PC-9 (cell line): ENCODE measurements at regions of chr4 and their contacts with region 1.

Region 1: DNA sequence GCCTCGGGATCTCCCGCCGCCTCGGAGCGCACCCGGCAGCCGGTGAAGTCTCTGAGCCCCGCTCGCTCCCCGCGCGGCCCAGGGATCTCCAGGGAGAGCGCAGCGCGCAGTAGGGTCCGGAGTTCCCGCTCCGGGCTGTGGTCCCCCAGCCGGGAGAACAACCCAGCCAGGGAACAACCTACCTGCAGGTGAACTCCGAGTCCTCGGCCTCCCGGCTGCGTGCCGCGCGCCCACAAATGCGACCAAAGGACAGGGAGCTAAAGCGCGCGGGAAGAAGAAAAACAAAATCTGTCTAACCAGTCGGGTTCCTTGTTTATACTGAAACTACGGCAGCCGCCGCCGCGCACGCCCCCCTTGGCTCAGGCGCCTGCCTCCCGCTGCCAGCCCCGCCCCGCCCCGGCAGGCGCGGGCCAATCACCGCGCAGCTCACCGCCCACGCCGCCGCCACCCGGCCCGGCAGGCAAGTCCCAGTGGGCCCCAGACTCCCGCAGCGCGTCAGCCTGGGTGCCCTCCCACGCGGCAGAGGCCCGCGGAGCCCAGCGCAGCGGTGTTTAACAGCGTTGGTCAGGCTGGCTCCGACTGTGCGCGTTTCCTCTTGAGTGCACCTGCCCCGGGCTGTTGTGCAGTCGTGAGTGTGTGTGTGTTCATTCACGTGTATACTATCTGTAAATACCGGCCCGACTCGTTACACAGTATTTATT is at the start of gene RASGEF1B:
- DNase-seq: peak; percentile 60 to 82
- H3K4me3 ChIP-seq: peak within 1 kb of the TSS; percentile 64
- H3K27ac ChIP-seq: 0 out of 2 replicates have a peak within 1 kb of the TSS, but pooled peaks have one; percentile 23
- H3K4me1 ChIP-seq: peaks cover 6% of the 10 kb centered on the region; the same call in 1 of the 2 replicates
- H3K27me3 ChIP-seq: no peaks in the 10 kb centered on the region
- CTCF ChIP-seq: no peak
- total RNA-seq, gene RASGEF1B: 0.70 and 1.0 TPM in 2 replicates

Region 2: GRCh38 chr4:79852305-79852730 is 1619.4 kb before region 1 on chr4:
- CTCF ChIA-PET with region 1: no interaction called
- POLR2A ChIA-PET with region 1: no interaction called
- intact Hi-C with region 1: no loop called
- DNase-seq: no peak
- H3K4me3 ChIP-seq: no peak overlapping the region
- H3K27ac ChIP-seq: no peak overlapping the region
- H3K4me1 ChIP-seq: no peaks in the 10 kb centered on the region
- H3K27me3 ChIP-seq: no peaks in the 10 kb centered on the region
- CTCF ChIP-seq: no peak

Region 3: DNA sequence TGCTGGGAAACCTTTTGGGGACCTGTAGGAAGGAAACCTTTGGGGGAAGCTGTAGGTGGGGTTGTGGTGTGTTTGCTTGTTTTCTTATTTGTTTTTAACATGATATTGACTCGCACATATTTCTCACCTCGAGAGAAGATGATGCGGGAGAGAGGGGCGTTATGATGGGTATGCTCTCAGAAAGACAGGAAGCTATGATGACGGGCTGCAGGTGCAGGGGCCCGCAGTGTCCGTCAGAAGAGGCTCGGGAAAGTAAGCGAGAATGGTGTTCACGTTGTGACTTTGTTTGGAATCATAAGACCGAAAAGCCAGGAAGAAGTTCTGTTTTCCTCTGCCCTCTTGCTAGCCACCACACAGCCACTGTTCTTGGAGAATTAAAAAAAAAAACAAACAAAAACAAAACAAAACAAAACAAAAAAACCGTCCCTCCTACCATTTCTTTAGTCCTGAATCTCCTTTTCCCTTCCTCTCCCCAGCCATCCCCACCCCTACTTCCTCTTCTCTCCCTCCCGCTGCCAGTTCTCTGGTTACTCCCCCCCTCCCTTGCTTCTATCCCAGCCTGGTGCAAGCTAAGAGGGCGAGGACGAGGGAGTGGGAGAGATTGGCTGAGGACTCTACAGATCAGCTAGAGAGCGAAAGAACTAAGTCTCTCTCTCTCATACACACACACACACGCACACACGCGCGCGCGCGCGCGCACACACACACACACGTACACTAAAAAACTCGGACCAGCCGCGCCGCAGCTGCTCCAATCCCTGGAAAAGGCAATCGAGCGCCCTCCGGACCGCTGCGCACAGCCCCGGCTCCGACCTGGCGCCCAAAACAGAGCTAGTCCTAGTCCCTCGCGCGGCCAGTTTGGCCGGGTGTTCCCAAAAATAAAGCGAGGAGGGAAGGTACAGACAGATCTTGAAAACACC is 441.4 kb before region 1 on chr4 and contains the start of gene BMP3:
- CTCF ChIA-PET with region 1: no interaction called
- POLR2A ChIA-PET with region 1: no interaction called
- intact Hi-C with region 1: no loop called
- DNase-seq: peak; percentile 20 to 48
- H3K4me3 ChIP-seq: peak within 1 kb of the TSS; percentile 63
- H3K27ac ChIP-seq: no peak within 1 kb of the TSS
- H3K4me1 ChIP-seq: 0 out of 2 replicates have a peak, but pooled peaks cover 6% of the 10 kb centered on the region
- H3K27me3 ChIP-seq: no peaks in the 10 kb centered on the region
- CTCF ChIP-seq: no peak
- total RNA-seq, gene BMP3: 0.41 and 0.50 TPM in 2 replicates

Region 4: DNA sequence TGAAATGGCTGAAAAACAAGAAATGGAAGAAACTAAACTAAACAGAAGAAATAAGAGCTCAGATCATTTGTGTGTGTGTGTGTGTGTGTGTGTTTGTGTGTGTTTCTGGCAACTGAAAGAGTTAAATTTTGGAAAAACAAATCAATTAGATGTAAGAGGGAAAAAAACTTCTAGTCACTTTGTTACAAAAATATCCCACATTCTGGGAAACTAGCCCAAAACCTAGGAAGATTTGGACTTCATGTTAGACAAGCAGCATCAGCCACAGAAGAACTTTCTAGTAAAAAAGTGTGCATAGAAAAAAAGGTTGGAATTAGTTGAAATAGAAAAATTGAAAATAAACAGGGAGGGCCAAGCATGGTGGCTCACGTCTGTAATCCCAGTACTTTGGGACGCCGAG is 145.2 kb before region 1 on chr4:
- CTCF ChIA-PET with region 1: no interaction called
- POLR2A ChIA-PET with region 1: no interaction called
- intact Hi-C with region 1: no loop called
- DNase-seq: no peak
- H3K4me3 ChIP-seq: no peak overlapping the region
- H3K27ac ChIP-seq: no peak overlapping the region
- H3K4me1 ChIP-seq: no peaks in the 10 kb centered on the region
- H3K27me3 ChIP-seq: no peaks in the 10 kb centered on the region
- CTCF ChIP-seq: no peak

Region 5: DNA sequence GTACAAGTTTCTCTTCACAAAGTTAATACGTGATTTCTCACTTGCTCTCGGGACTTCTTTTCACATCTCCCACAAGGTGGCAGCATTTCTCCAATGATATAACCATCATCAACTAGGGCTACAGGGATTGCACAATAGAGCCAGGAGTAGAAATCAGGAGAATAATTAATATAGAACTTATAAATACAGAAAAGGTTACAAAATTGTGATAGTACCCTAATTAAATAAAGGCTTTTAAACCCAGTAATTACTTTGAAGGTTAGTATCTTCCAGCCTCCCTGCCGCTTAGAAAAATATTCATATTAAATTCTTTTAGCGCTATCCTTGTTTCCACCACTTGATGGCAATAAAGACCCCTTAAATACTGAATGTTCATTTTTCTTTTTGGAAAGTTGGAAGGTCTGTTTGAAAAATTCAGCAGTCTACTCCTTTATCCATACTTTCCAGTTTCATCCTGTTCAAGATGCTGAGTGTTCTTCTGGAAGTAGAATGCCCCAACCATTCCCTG is 65.8 kb before region 1 on chr4:
- CTCF ChIA-PET with region 1: interaction called, 4 read pairs
- POLR2A ChIA-PET with region 1: no interaction called
- intact Hi-C with region 1: loop called (anchors 1 kb)
- DNase-seq: peak; percentile 8 to 52
- H3K4me3 ChIP-seq: no peak overlapping the region
- H3K27ac ChIP-seq: no peak overlapping the region
- H3K4me1 ChIP-seq: no peaks in the 10 kb centered on the region
- H3K27me3 ChIP-seq: no peaks in the 10 kb centered on the region
- CTCF ChIP-seq: peak; percentile 87

Region 6: DNA sequence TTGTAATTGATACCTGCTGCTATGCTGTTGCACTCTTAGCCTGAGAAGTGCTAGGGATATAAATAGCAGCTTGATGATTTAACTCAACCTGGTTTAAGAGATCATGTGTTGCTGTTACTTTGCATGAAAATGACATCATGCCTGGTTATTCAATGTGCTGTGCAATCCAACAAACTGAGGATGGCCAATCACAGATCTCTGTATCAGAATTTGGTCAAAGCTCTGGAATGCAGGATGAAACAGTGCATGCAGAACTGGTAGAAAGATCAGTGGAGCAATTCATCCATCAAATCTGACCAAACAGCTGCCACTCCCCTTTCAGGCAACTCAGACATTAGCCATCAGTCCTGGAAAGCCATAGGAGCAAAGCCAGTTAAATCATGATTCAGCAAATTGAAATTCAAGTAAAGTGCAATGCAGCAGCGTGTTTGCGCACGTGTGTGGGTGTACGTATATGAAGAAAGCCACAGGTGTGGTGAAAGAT is 160.3 kb after region 1 on chr4:
- CTCF ChIA-PET with region 1: no interaction called
- POLR2A ChIA-PET with region 1: no interaction called
- intact Hi-C with region 1: loop called (anchors 10 kb)
- DNase-seq: peak; percentile 41 to 79
- H3K4me3 ChIP-seq: no peak overlapping the region
- H3K27ac ChIP-seq: peak overlapping the region; percentile 59
- H3K4me1 ChIP-seq: 0 out of 2 replicates have a peak, but pooled peaks cover 5% of the 10 kb centered on the region
- H3K27me3 ChIP-seq: no peaks in the 10 kb centered on the region
- CTCF ChIP-seq: no peak

Region 7: GRCh38 chr4:81844717-81845116 is 373.0 kb after region 1 on chr4:
- CTCF ChIA-PET with region 1: interaction called, 5 read pairs
- POLR2A ChIA-PET with region 1: no interaction called
- intact Hi-C with region 1: loop called (anchors 1 kb)
- DNase-seq: peak; percentile 58 to 74
- H3K4me3 ChIP-seq: no peak overlapping the region
- H3K27ac ChIP-seq: no peak overlapping the region
- H3K4me1 ChIP-seq: no peaks in the 10 kb centered on the region
- H3K27me3 ChIP-seq: no peaks in the 10 kb centered on the region
- CTCF ChIP-seq: peak; percentile 60

Region 8: DNA sequence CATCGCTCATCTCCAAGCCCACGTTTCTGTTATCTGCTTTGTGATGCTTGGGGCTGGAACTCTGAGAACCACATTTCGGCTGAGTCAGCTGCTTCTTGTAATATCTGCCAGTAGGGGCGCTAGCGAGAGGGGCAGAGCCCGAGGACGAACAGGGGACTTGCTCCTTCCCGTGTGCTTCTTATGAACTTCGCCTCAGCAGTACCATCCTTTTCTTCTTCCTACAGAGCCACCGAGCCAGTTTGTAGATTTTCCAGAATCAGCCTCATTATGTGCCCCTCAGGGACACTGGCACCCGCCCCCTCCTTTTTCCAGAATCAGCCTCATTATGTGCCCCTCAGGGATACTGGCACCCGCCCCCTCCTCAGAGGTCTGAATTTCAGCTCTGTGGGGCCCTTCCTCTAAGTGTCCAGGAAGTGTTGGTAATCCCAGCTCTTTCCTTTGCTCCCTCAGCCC is 441.7 kb after region 1 on chr4:
- CTCF ChIA-PET with region 1: no interaction called
- POLR2A ChIA-PET with region 1: no interaction called
- intact Hi-C with region 1: loop called (anchors 5 kb)
- DNase-seq: peak in 1 of 2 experiments; percentile 17
- H3K4me3 ChIP-seq: no peak overlapping the region
- H3K27ac ChIP-seq: no peak overlapping the region
- H3K4me1 ChIP-seq: no peaks in the 10 kb centered on the region
- H3K27me3 ChIP-seq: no peaks in the 10 kb centered on the region
- CTCF ChIP-seq: peak; percentile 66

Region 9: DNA sequence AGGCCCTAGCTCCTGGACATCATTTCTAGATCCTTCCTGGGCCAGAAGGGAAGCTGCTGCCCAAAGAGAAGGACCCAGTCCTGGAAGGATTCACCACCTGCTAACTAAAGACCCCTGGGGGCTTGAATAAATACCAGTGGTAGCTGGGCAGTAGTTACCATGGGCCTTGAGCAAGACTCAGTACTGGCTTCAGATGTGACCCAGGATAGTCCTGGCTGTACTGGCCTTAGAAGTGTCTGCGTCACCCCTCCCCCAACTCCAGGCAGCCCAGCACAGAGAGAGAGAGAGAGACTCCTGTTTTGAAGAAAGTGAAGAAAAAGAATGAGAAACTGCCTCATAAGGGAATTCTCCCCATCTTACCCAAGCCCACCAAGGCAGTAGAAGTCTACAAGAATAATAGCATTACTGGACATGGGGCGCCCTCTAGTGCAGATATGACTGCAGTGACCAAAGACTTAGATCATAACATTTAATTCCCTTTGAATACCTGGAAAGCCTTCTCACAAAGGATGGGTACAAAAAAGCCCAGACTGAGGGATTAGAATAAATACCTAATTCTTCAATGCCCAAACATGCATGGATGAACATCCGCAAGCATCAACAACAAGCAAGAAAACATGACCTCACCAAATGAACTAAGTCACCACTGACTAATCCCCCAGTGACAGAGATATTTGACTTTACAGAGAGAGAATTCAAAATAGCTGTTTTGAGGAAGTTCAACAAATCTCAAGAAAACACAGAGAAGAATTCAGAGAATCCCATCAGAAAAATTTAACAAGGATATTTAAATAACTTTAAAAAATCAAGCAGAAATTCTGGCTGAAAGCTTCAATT is 730.3 kb after region 1 on chr4:
- CTCF ChIA-PET with region 1: no interaction called
- POLR2A ChIA-PET with region 1: no interaction called
- intact Hi-C with region 1: loop called (anchors 2 kb)
- DNase-seq: peak in 1 of 2 experiments; percentile 6
- H3K4me3 ChIP-seq: no peak overlapping the region
- H3K27ac ChIP-seq: no peak overlapping the region
- H3K4me1 ChIP-seq: no peaks in the 10 kb centered on the region
- H3K27me3 ChIP-seq: no peaks in the 10 kb centered on the region
- CTCF ChIP-seq: peak; percentile 72

Region 10: DNA sequence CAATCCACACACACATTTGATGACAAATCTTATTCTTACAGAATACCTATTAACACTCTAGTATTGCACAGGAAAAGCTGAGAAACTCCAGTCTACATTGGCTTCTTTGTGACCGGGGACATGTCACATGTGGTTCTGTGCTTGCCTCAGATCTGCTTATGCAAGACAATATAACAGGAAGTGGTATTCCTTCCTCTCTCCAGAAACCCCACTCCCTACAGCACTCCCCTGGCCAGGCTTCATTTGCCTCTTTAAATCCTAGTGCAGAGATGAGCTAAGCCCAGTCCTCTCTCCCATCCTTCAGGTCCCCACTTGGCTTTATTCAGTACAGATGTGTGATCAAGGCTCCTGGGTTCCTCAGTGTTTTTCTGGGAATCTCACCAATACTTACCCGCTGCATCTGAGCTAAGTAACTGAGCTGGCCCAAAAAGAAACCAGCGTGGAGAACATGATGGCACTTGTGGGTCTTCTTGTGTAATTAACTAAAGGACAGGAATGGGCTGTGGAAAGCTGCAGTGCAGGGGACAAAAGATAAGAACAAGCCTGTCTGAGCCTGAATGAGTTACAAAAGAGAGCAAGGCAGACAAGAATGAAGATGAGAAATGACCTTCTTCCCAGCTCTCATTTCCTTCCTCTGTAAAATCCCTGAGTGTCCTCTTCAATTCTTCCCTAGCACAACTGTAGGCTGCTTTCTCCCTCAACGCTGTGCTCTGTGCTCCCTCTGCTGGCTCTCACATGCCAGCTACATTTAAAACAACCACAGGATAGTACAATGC is 796.5 kb after region 1 on chr4:
- CTCF ChIA-PET with region 1: no interaction called
- POLR2A ChIA-PET with region 1: no interaction called
- intact Hi-C with region 1: loop called (anchors 2 kb)
- DNase-seq: no peak
- H3K4me3 ChIP-seq: no peak overlapping the region
- H3K27ac ChIP-seq: no peak overlapping the region
- H3K4me1 ChIP-seq: no peaks in the 10 kb centered on the region
- H3K27me3 ChIP-seq: no peaks in the 10 kb centered on the region
- CTCF ChIP-seq: peak; percentile 67